ENCODE measurements at regions of chr15 and their contacts with region 1.

Region 1: DNA sequence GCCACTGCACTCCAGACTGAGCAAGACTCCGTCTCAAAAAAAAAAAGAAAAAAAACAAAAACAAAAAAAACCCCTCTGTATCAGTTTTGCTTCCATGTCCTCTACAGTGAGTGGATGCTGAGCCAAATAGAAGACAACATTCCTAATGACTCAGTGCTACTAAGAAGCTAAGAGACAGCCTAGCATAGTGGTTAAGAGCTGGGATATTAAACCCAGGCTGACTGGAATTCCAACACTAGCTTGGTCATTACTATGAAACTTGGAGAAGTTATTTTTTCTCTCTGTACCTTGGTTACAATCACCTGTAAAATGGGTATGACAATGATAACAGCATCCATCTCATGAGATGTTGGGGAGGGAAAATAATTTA is 60.9 kb upstream of the PYGO1 start:
- DNase-seq: peak; percentile 44
- H3K4me3 ChIP-seq: no peak overlapping the region
- H3K27ac ChIP-seq: no peak overlapping the region
- H3K4me1 ChIP-seq: no peaks in the 10 kb centered on the region
- H3K27me3 ChIP-seq: no peaks in the 10 kb centered on the region
- CTCF ChIP-seq: no peak

Region 2: DNA sequence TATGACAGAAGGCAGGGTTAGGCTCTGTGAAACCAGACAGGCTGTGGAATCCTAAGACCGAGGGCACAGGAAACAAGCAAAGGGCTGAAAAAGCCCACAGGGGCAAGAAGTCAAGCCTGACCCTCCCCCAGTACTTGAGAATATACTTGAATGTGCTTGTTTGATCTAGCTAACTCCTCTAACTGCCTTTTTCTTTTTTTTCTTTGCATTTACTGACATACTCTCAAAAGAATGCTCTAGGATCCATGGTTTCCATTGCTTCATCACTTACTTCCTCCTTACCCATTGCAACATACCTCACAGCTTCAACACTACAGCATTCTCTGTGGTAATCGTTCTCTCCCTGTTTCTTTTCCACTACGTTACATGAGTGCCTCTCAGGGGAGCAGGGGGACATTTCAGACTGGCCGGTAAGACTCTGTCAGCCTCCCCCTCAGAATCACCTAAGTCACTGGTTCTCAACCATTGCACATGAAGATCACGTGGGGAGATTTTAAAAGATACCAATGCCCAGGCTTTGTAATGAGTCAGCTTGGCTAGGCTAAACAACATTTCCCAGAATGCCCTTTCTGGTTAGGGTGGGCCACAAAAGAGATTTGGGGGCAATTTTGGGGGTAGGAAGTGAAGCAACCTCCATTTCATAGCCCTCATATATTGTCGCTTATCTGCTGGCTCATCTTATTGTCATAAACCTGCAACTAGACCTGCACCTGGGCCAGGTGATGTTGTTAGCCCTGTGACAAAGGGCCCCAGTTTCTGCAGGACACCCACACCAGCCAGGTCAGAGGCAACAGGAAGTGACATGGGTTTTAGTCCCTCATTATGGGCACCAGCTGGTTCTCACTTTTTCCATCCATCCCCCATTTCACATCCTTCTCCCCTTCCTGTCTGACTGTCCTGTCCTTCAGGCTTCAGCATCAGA is 427.7 kb before region 1 on chr15:
- CTCF ChIA-PET with region 1: no interaction called
- dilution Hi-C with region 1: no loop called
- in situ Hi-C with region 1: no loop called
- intact Hi-C with region 1: loop called (anchors 5 kb)
- DNase-seq: peak; percentile 84
- H3K4me3 ChIP-seq: no peak overlapping the region
- H3K27ac ChIP-seq: peak overlapping the region; percentile 54
- H3K4me1 ChIP-seq: peaks cover 16% of the 10 kb centered on the region
- H3K27me3 ChIP-seq: no peaks in the 10 kb centered on the region
- CTCF ChIP-seq: no peak

Region 3: GRCh38 chr15:55526559-55527036 is 122.4 kb before region 1 on chr15:
- CTCF ChIA-PET with region 1: no interaction called
- dilution Hi-C with region 1: no loop called
- in situ Hi-C with region 1: loop called (anchors 5 to 10 kb)
- intact Hi-C with region 1: loop called (anchors 2 kb)
- DNase-seq: peak; percentile 39
- H3K4me3 ChIP-seq: no peak overlapping the region
- H3K27ac ChIP-seq: no peak overlapping the region
- H3K4me1 ChIP-seq: no peaks in the 10 kb centered on the region
- H3K27me3 ChIP-seq: peaks cover 2% of the 10 kb centered on the region
- CTCF ChIP-seq: peak; percentile 72 to 79

Region 4: GRCh38 chr15:55780273-55780672 is 131.2 kb after region 1 on chr15:
- CTCF ChIA-PET with region 1: interaction called, 16 read pairs
- dilution Hi-C with region 1: no loop called
- in situ Hi-C with region 1: no loop called
- intact Hi-C with region 1: no loop called
- DNase-seq: no peak
- H3K4me3 ChIP-seq: no peak overlapping the region
- H3K27ac ChIP-seq: no peak overlapping the region
- H3K4me1 ChIP-seq: peaks cover 4% of the 10 kb centered on the region
- H3K27me3 ChIP-seq: no peaks in the 10 kb centered on the region
- CTCF ChIP-seq: no peak

Region 5: DNA sequence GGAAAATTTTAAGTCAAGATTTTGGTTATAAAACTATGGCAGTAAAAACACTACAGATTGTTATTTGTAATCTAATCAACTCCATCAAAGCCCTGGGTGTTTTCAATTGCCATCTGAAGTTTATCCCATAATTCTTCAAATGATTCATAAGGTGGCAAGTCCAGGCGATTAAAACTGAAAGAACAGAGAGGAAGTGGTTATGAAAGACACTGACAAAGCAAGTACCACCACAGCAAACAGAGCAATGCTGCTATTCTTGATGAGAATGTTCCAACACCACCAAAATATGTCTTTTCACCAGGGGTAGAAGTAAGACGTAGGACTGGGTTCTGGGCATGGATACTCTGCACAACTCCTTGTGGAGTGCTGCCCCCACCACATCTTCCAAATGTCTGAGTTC is 180.8 kb after region 1 on chr15:
- CTCF ChIA-PET with region 1: no interaction called
- dilution Hi-C with region 1: no loop called
- in situ Hi-C with region 1: no loop called
- intact Hi-C with region 1: loop called (anchors 5 kb)
- DNase-seq: peak; percentile 78
- H3K4me3 ChIP-seq: no peak overlapping the region
- H3K27ac ChIP-seq: no peak overlapping the region
- H3K4me1 ChIP-seq: peaks cover 32% of the 10 kb centered on the region
- H3K27me3 ChIP-seq: no peaks in the 10 kb centered on the region
- CTCF ChIP-seq: no peak

Region 6: GRCh38 chr15:55897560-55898336 is 248.7 kb after region 1 on chr15:
- CTCF ChIA-PET with region 1: no interaction called
- dilution Hi-C with region 1: no loop called
- in situ Hi-C with region 1: no loop called
- intact Hi-C with region 1: loop called (anchors 2 kb)
- DNase-seq: peak; percentile 79
- H3K4me3 ChIP-seq: no peak overlapping the region
- H3K27ac ChIP-seq: peak overlapping the region; percentile 77
- H3K4me1 ChIP-seq: peaks cover 14% of the 10 kb centered on the region
- H3K27me3 ChIP-seq: no peaks in the 10 kb centered on the region
- CTCF ChIP-seq: peak; percentile 91 to 99

Region 7: DNA sequence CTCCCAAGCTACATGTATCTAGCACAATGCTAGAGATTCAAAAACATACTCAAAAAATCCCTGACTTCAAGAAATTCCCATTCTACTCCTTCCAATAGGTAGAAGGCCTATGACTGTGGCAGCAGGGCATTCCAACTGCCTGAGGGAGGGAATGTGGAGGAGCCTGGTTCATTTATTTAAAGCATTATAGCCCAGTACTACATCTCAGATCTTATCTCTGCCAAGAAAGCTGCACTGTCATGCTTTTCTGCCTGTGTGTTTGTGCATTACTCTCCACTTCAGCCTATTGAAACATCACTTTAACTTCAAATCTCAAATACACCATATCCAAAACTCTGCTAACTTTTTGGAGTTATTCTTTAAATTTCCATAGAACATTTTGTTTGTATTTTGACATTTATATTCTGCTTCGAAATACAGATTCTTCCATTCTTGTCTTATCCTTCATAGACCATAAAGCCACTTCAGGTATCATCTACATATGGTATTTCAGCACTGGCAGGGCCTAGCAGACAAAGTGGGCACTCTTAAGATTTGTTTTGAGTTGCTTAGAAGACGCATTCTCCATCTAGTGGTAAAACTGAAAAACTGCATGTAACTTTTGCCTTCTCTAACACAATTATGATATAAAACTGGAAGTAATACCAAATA is 403.5 kb after region 1 on chr15:
- CTCF ChIA-PET with region 1: no interaction called
- dilution Hi-C with region 1: no loop called
- in situ Hi-C with region 1: loop called in 1 of 2 experiments (anchors 25 kb)
- intact Hi-C with region 1: loop called (anchors 5 kb)
- DNase-seq: peak; percentile 48
- H3K4me3 ChIP-seq: no peak overlapping the region
- H3K27ac ChIP-seq: peak overlapping the region; percentile 4
- H3K4me1 ChIP-seq: peaks cover 8% of the 10 kb centered on the region
- H3K27me3 ChIP-seq: no peaks in the 10 kb centered on the region
- CTCF ChIP-seq: peak; percentile 71 to 81

Measured in mammary epithelial cell (primary cell).